ENCODE measurements at regions of chr7 and their contacts with region 1.

Region 1: GRCh38 chr7:146741911-146742310 is 625.3 kb downstream of the CNTNAP2 start:
- DNase-seq: no peak
- ATAC-seq: no peak
- H3K4me3 ChIP-seq: no peak overlapping the region
- H3K27ac ChIP-seq: no peak overlapping the region
- H3K4me1 ChIP-seq: no peaks in the 10 kb centered on the region
- H3K27me3 ChIP-seq: no peaks in the 10 kb centered on the region
- CTCF ChIP-seq: no peak

Region 2: GRCh38 chr7:146067880-146068279 is 674.0 kb before region 1 on chr7:
- intact Hi-C with region 1: loop called in 1 of 10 experiments (anchors 10 kb)
- DNase-seq: no peak
- ATAC-seq: peak in 4 of 8 donors; percentile 39 to 81 (median 52)
- H3K4me3 ChIP-seq: no peak overlapping the region
- H3K27ac ChIP-seq: no peak overlapping the region
- H3K4me1 ChIP-seq: no peaks in the 10 kb centered on the region
- H3K27me3 ChIP-seq: no peaks in the 10 kb centered on the region
- CTCF ChIP-seq: peak in 3 of 9 donors; percentile 10 to 19 (median 15)

Region 3: GRCh38 chr7:146683439-146683838 is 58.5 kb before region 1 on chr7:
- intact Hi-C with region 1: loop called in 1 of 10 experiments (anchors 10 kb)
- DNase-seq: no peak
- ATAC-seq: no peak
- H3K4me3 ChIP-seq: no peak overlapping the region
- H3K27ac ChIP-seq: no peak overlapping the region
- H3K4me1 ChIP-seq: no peaks in the 10 kb centered on the region
- H3K27me3 ChIP-seq: no peaks in the 10 kb centered on the region
- CTCF ChIP-seq: no peak